Breast epithelium (tissue), 4 donors: ENCODE measurements at regions of chr11 and their contacts with region 1.

Region 1: DNA sequence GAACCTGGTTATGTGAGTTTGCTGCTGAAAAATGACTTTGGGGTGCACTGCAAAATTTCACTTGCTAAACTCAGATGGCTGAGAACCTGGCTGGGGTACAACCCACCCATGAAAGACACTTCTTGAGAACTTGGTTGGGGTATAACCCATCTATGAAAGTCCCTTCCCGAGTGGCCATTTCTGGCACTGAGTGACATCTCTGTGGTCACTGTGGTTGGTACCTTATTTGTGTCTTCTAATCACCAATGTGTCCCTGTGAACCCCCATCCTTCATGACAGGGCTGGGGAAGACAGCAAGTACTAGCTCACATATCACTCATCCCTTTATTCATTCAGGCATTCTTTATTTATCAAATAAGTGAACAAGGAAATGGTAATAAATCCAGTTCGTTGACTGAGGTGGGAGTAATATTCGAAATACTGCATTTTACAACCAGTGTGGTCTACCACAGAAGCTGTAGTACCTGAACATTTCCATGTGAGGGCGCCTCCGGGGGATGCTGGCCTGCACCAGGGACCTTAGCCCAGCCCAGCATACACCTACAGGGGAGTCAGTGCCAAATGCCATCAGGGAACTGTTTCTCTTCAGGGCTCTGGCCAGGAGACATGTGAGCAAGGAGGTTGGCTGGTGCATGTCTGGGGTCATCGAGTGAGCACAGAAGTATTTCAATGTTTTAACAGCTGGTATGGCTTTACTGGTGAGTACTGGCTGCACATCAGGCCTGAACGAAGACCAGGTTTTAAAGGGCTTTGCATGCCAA is 122.1 kb downstream of the CSNK2A3 start:
- DNase-seq: no peak
- H3K4me3 ChIP-seq: no peak overlapping the region
- H3K27ac ChIP-seq: no peak overlapping the region
- H3K4me1 ChIP-seq: no peaks in the 10 kb centered on the region
- H3K27me3 ChIP-seq: no peaks in the 10 kb centered on the region
- CTCF ChIP-seq: peak in 1 of 3 donors; percentile 10
- POLR2A ChIP-seq: no peak

Region 2: DNA sequence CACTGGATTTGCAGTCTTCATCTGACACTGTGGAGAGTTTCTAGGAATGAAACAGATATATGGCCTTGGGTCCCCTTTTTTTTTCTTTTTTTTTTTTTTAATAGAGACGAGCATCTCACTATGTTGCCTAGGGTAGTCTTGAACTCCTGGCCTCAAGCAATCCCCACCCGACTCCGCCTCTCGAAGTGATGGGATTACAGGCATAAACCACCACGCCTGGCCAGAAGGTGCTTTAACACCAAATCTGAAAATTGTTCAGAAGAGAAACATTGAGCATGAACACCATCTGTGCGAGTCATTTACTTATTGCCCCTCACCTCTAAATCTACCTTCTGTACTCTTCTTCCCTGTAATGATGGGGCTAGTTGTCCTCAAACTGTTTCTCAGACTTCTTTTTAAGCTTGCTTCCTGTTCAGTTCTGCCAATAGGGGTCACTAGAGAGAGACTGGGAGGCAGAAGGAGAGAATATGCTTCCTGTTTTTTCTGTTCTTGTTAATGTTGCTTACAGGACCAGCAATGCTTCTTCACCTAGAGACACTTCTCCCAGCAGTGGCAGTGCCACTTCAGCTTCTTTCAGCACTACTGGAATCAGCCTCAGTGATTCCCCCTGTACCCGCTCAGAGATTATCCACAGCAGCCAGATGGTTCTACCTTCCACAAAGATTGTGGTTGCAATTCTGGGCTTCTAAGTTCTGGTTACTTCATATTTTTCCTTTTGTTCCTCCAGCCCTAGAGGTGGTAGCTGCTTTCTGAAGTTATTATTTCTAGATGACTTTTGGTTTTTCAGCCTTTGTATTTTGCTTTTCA is 352.4 kb before region 1 on chr11:
- intact Hi-C with region 1: no loop called
- DNase-seq: no peak
- H3K4me3 ChIP-seq: no peak overlapping the region
- H3K27ac ChIP-seq: no peak overlapping the region
- H3K4me1 ChIP-seq: no peaks in the 10 kb centered on the region
- H3K27me3 ChIP-seq: no peaks in the 10 kb centered on the region
- CTCF ChIP-seq: peak in 1 of 3 donors; percentile 30
- POLR2A ChIP-seq: no peak

Region 3: DNA sequence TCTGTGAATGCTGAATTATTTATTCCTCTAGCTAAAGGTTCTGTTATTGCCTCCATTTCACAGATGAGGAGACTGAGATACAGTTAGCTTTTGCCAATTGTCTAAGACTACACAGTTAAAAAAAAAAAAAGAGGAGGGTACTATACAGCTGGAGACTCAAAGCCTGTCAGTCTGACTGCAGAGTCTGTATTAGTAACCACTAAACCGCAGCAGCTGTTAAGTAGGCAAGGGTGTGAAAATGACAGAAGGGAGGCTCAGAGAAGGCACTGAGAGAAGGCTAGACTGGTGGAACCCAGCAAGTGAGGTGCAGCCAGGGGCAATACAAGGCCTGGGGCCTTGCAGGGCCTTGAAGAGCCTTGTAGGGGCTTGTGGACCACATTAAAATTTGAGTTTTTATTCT is 59.1 kb before region 1 on chr11:
- intact Hi-C with region 1: no loop called
- DNase-seq: no peak
- H3K4me3 ChIP-seq: no peak overlapping the region
- H3K27ac ChIP-seq: no peak overlapping the region
- H3K4me1 ChIP-seq: no peaks in the 10 kb centered on the region
- H3K27me3 ChIP-seq: no peaks in the 10 kb centered on the region
- CTCF ChIP-seq: no peak
- POLR2A ChIP-seq: no peak

Region 4: GRCh38 chr11:11202885-11203284 is 28.1 kb before region 1 on chr11:
- intact Hi-C with region 1: no loop called
- DNase-seq: no peak
- H3K4me3 ChIP-seq: no peak overlapping the region
- H3K27ac ChIP-seq: no peak overlapping the region
- H3K4me1 ChIP-seq: no peaks in the 10 kb centered on the region
- H3K27me3 ChIP-seq: no peaks in the 10 kb centered on the region
- CTCF ChIP-seq: no peak
- POLR2A ChIP-seq: no peak

Region 5: GRCh38 chr11:12581923-12582322 is 1350.9 kb after region 1 on chr11:
- intact Hi-C with region 1: loop called (anchors 10 kb)
- DNase-seq: no peak
- H3K4me3 ChIP-seq: no peak overlapping the region
- H3K27ac ChIP-seq: no peak overlapping the region
- H3K4me1 ChIP-seq: no peaks in the 10 kb centered on the region
- H3K27me3 ChIP-seq: no peaks in the 10 kb centered on the region
- CTCF ChIP-seq: no peak
- POLR2A ChIP-seq: no peak